Activated T-helper 1 cell treated with anti-CD3 and anti-CD28 coated beads, Interleukin-12 subunit alpha, Interleukin-12 subunit beta, Interleukin-2, Interleukin-4 antibody, amounts not matched to agents 30 ng/mL and 10 ng/mL and 1 ng/mL, durations not matched to agents 14 hours and 24 hours and 36 hours (primary cell): ENCODE measurements at regions of chrX and their contacts with region 1.

Region 1: GRCh38 chrX:107627838-107628661 is at the start of gene PRPS1:
- DNase-seq: peak; percentile 86
- H3K4me3 Mint-ChIP-seq: peak within 1 kb of the TSS; percentile 96
- H3K27ac Mint-ChIP-seq: peak within 1 kb of the TSS; percentile 93
- H3K4me1 Mint-ChIP-seq: peaks cover 30% of the 10 kb centered on the region
- H3K27me3 Mint-ChIP-seq: no peaks in the 10 kb centered on the region
- total RNA-seq, gene PRPS1: 97.9 and 101 TPM in 2 replicates

Region 2: DNA sequence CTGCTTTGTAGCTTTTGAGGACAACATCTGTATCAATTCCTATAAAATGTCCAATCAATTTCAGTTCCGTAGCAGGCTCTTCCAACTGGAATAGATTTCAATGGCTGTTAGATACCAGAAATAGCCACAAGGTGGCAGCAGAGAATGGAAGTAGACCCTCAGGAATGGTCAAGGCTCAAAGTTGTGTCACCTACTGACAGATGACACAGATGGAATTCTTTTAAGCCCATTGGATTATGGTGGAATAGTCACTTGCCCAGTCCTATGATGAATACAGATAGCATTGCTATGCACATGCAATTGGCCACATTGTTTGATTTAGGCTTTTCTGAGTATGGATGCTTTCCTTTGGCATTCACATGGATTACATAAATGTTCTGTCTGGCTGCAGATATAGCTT is 1146.7 kb before region 1 on chrX:
- intact Hi-C with region 1: loop called (anchors 5 kb)
- DNase-seq: no peak
- H3K4me3 Mint-ChIP-seq: no peak overlapping the region
- H3K27ac Mint-ChIP-seq: no peak overlapping the region
- H3K4me1 Mint-ChIP-seq: peaks cover 27% of the 10 kb centered on the region
- H3K27me3 Mint-ChIP-seq: no peaks in the 10 kb centered on the region

Region 3: GRCh38 chrX:106939566-106939965 is 688.5 kb before region 1 on chrX:
- intact Hi-C with region 1: no loop called
- DNase-seq: no peak
- H3K4me3 Mint-ChIP-seq: no peak overlapping the region
- H3K27ac Mint-ChIP-seq: no peak overlapping the region
- H3K4me1 Mint-ChIP-seq: no peaks in the 10 kb centered on the region
- H3K27me3 Mint-ChIP-seq: no peaks in the 10 kb centered on the region

Region 4: GRCh38 chrX:106999002-106999975 is 628.8 kb before region 1 on chrX:
- intact Hi-C with region 1: loop called (anchors 10 kb)
- DNase-seq: peak; percentile 12
- H3K4me3 Mint-ChIP-seq: peak overlapping the region; percentile 87
- H3K27ac Mint-ChIP-seq: no peak overlapping the region
- H3K4me1 Mint-ChIP-seq: peaks cover 12% of the 10 kb centered on the region
- H3K27me3 Mint-ChIP-seq: peaks cover 3% of the 10 kb centered on the region

Region 5: DNA sequence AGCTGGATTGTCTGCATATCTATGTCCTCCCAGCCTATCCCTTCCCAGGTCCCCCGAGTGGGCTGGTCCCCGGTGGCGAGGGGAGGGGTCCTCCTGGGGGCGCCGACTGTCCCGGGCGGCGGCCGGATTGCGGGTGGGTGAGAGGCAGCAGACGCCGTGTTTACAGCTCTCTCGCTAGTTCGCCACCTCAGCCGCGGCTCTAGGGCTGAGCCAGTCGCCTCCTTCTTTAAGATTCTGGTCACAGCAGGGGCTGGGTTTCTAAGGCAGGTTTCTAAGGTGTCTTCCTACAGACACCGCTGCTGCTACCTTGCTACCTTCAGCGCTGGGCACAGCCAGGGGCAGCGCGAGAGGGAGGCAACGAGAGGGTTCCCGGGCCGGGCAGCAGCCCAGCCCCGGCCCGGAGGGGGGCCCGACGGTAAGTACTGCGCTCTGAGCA is 121.4 kb before region 1 on chrX:
- intact Hi-C with region 1: no loop called
- DNase-seq: no peak
- H3K4me3 Mint-ChIP-seq: no peak overlapping the region
- H3K27ac Mint-ChIP-seq: no peak overlapping the region
- H3K4me1 Mint-ChIP-seq: no peaks in the 10 kb centered on the region
- H3K27me3 Mint-ChIP-seq: peaks cover 39% of the 10 kb centered on the region

Region 6: DNA sequence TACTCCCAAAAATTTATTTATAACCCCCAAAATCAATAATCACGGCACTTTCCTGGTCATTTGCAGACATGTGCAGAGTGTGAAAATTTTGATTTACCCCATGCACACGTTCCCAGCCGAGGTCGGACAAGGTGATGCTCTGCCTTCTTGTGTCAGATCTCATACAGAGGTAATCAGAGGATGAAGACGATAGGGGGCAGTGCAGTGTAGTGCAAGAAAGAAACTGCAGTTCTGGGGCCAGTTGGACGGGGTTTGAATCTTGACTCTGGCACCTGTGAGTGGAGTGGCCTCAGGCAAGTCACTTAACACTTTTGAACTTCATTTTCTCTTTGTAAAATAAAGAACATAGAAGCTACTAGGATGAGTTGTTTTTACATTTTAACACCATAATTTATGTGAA is 90.2 kb before region 1 on chrX:
- intact Hi-C with region 1: loop called (anchors 5 kb)
- DNase-seq: peak; percentile 6
- H3K4me3 Mint-ChIP-seq: no peak overlapping the region
- H3K27ac Mint-ChIP-seq: no peak overlapping the region
- H3K4me1 Mint-ChIP-seq: no peaks in the 10 kb centered on the region
- H3K27me3 Mint-ChIP-seq: peaks cover 8% of the 10 kb centered on the region

Region 7: DNA sequence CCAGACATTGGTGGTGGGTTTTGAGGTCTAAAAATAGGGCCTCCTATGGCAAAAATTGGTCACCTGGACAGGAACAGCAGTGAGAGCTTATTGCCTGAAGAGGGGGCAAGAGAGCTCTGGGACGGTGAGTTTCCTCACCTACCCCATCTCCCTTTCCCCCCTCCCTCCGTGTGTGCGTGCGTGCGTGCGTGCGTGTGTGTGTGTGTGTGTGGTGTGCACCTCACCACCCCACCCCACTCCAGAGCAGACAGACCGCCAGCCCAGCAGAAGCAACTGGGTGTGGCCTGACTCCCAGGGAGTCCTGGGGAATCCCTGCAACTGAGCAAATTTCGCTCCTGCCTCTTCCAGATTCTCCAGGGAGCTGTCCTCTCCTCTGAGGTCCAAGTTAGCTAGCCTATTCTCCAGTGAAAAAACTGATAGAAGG is 44.9 kb after region 1 on chrX:
- intact Hi-C with region 1: loop called (anchors 1 kb)
- DNase-seq: peak; percentile 70
- H3K4me3 Mint-ChIP-seq: peak overlapping the region; percentile 53
- H3K27ac Mint-ChIP-seq: peak overlapping the region; percentile 99
- H3K4me1 Mint-ChIP-seq: peaks cover 46% of the 10 kb centered on the region
- H3K27me3 Mint-ChIP-seq: no peaks in the 10 kb centered on the region

Region 8: GRCh38 chrX:108091266-108091877 is 463.3 kb after region 1 on chrX and contains the starts of genes ATG4A and PSMD10:
- intact Hi-C with region 1: loop called (anchors 1 kb)
- DNase-seq: peak; percentile 85
- H3K4me3 Mint-ChIP-seq: no peak within 1 kb of the TSS
- H3K27ac Mint-ChIP-seq: no peak within 1 kb of the TSS
- H3K4me1 Mint-ChIP-seq: peaks cover 17% of the 10 kb centered on the region
- H3K27me3 Mint-ChIP-seq: no peaks in the 10 kb centered on the region
- total RNA-seq, gene ATG4A: 9.6 and 9.8 TPM in 2 replicates
- total RNA-seq, gene PSMD10: 42.5 and 44.1 TPM in 2 replicates